Calu3 (cell line): ENCODE measurements at regions of chr12 and their contacts with region 1.

Region 1: GRCh38 chr12:93908846-93909567 is 231.8 kb downstream of the CRADD start:
- DNase-seq: peak; percentile 14
- H3K4me3 Mint-ChIP-seq: no peak overlapping the region
- H3K27ac Mint-ChIP-seq: no peak overlapping the region
- H3K4me1 Mint-ChIP-seq: peaks cover under 1% of the 10 kb centered on the region
- H3K27me3 Mint-ChIP-seq: no peaks in the 10 kb centered on the region
- CTCF ChIP-seq: no peak

Region 2: GRCh38 chr12:93785262-93786010 is 123.6 kb before region 1 on chr12:
- CTCF ChIA-PET with region 1: no interaction called
- intact Hi-C with region 1: loop called (anchors 5 kb)
- DNase-seq: peak; percentile 63
- H3K4me3 Mint-ChIP-seq: peak overlapping the region; percentile 4
- H3K27ac Mint-ChIP-seq: peak overlapping the region; percentile 74
- H3K4me1 Mint-ChIP-seq: peaks cover 34% of the 10 kb centered on the region
- H3K27me3 Mint-ChIP-seq: no peaks in the 10 kb centered on the region
- CTCF ChIP-seq: no peak

Region 3: GRCh38 chr12:95173392-95174251 is 1264.6 kb after region 1 on chr12:
- CTCF ChIA-PET with region 1: no interaction called
- intact Hi-C with region 1: no loop called
- DNase-seq: peak; percentile 81
- H3K4me3 Mint-ChIP-seq: peak overlapping the region; percentile 39
- H3K27ac Mint-ChIP-seq: peak overlapping the region; percentile 71
- H3K4me1 Mint-ChIP-seq: peaks cover 70% of the 10 kb centered on the region
- H3K27me3 Mint-ChIP-seq: no peaks in the 10 kb centered on the region
- CTCF ChIP-seq: no peak